ENCODE measurements at regions of chr3 and their contacts with region 1.

Region 1: GRCh38 chr3:185942907-185943759 is 5.3 kb upstream of the TRA2B start:
- DNase-seq: peak; percentile 91
- H3K4me3 Mint-ChIP-seq: no peak overlapping the region
- H3K27ac Mint-ChIP-seq: no peak overlapping the region
- H3K4me1 Mint-ChIP-seq: peaks cover 14% of the 10 kb centered on the region
- H3K27me3 Mint-ChIP-seq: no peaks in the 10 kb centered on the region

Region 2: DNA sequence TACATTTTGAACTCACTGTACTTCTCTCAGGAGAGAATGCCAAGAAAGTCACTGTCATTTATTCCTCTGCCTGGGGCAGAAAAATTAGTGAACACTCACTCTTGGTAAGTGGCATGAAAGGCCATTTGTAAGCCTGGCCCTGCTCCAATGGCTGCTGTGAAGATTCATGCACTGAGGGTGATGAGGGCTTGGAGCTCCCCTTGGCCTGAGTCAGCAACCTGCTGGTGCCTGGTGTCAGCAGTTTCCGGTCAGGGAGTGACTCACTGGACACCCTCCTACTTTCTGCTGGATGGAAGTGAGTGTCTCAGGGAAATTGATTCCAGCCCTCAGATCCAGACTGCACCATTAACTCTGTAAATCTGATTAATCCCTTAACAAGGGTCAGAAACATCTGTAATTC is 42.9 kb before region 1 on chr3:
- CTCF ChIA-PET with region 1: interaction called, 12 read pairs
- POLR2A ChIA-PET with region 1: no interaction called
- intact Hi-C with region 1: no loop called
- DNase-seq: peak; percentile 30
- H3K4me3 Mint-ChIP-seq: no peak overlapping the region
- H3K27ac Mint-ChIP-seq: no peak overlapping the region
- H3K4me1 Mint-ChIP-seq: no peaks in the 10 kb centered on the region
- H3K27me3 Mint-ChIP-seq: peaks cover 1% of the 10 kb centered on the region

Region 3: DNA sequence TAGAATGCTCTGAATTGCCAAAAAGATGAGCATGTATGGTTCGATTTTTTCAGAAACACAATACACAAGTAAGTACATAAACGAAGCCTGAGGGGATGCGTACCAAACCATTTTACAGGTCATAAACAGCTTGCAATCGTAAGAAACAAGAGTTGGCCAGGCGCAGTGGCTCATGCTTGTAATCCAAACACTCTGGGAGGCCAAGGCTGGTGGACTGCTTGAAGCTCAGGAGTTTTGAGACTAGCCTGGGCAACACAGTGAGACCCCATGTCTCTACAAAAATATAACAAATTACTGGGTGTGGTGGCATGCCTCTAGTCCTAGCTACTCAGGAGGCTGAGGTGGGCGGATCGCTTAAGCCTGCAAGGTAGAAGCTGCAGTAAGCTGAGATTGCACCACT is 18.8 kb before region 1 on chr3:
- CTCF ChIA-PET with region 1: interaction called, 32 read pairs
- POLR2A ChIA-PET with region 1: interaction called, 50 read pairs
- intact Hi-C with region 1: no loop called
- DNase-seq: no peak
- H3K4me3 Mint-ChIP-seq: no peak overlapping the region
- H3K27ac Mint-ChIP-seq: peak overlapping the region; percentile 60
- H3K4me1 Mint-ChIP-seq: peaks cover 58% of the 10 kb centered on the region
- H3K27me3 Mint-ChIP-seq: no peaks in the 10 kb centered on the region

Region 4: GRCh38 chr3:185959609-185960517 is 16.7 kb after region 1 on chr3:
- CTCF ChIA-PET with region 1: interaction called, 120 read pairs
- POLR2A ChIA-PET with region 1: interaction called, 3 read pairs
- intact Hi-C with region 1: loop called (anchors 1 kb)
- DNase-seq: no peak
- H3K4me3 Mint-ChIP-seq: no peak overlapping the region
- H3K27ac Mint-ChIP-seq: no peak overlapping the region
- H3K4me1 Mint-ChIP-seq: no peaks in the 10 kb centered on the region
- H3K27me3 Mint-ChIP-seq: peaks cover 2% of the 10 kb centered on the region

Region 5: GRCh38 chr3:185976977-185977678 is 34.0 kb after region 1 on chr3:
- CTCF ChIA-PET with region 1: interaction called, 48 read pairs
- POLR2A ChIA-PET with region 1: no interaction called
- intact Hi-C with region 1: loop called (anchors 1 kb)
- DNase-seq: peak; percentile 92
- H3K4me3 Mint-ChIP-seq: no peak overlapping the region
- H3K27ac Mint-ChIP-seq: peak overlapping the region; percentile 23
- H3K4me1 Mint-ChIP-seq: peaks cover 15% of the 10 kb centered on the region
- H3K27me3 Mint-ChIP-seq: no peaks in the 10 kb centered on the region

Region 6: DNA sequence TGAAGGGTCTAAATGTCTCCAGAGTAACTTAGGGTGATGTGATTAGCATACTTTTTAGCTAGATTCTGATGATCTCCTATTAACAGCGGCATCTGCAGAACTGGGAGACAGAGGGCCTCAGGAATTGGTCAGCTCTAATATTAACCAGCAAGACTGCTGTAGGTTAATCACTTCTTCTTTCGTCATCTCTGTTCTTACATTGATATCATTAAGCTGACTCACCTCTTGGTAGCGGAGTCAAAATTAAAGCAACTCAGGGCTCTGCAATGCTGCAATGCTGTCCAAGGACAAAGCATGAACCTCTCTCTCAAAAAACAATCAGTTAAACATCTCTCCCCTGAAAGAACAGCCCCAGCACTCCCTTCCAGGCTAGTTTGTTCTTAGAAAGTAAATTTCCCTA is 52.2 kb after region 1 on chr3:
- CTCF ChIA-PET with region 1: interaction called, 11 read pairs
- POLR2A ChIA-PET with region 1: no interaction called
- intact Hi-C with region 1: no loop called
- DNase-seq: no peak
- H3K4me3 Mint-ChIP-seq: no peak overlapping the region
- H3K27ac Mint-ChIP-seq: no peak overlapping the region
- H3K4me1 Mint-ChIP-seq: no peaks in the 10 kb centered on the region
- H3K27me3 Mint-ChIP-seq: peaks cover 7% of the 10 kb centered on the region

Region 7: DNA sequence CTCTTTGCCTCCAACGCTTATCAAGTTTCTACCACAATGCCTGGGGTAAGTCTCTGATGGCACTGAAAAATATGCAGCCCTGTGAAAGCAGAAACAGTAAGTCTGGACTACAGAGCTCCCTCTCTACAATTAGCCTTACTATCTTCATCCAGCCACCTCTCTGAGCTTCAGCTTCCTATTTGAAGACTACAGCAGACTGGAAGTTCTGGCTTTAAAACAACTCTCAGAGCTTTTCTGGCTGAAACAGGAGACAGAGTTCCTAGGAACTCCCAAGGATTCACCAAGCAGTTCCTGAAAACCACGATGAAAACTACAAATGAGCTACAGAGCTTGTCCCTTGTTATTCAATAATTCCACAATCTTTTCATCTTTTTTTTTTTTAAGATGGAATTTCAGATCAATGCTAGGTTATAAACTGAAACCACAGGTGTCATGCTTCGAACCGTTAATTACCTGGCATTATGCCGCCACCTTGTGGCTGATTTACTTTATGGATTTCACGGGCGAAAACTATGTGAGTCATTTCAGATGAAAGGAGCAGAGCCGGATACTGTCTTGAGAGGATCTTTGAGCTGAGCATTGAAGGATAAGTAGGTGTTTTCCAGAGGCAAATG is 597.2 kb after region 1 on chr3:
- CTCF ChIA-PET with region 1: interaction called, 59 read pairs
- POLR2A ChIA-PET with region 1: interaction called, 6 read pairs
- intact Hi-C with region 1: loop called (anchors 1 kb)
- DNase-seq: peak; percentile 90
- H3K4me3 Mint-ChIP-seq: no peak overlapping the region
- H3K27ac Mint-ChIP-seq: peak overlapping the region; percentile 25
- H3K4me1 Mint-ChIP-seq: peaks cover 57% of the 10 kb centered on the region
- H3K27me3 Mint-ChIP-seq: no peaks in the 10 kb centered on the region

Region 8: GRCh38 chr3:187101184-187102072 is 1158.3 kb after region 1 on chr3:
- CTCF ChIA-PET with region 1: no interaction called
- POLR2A ChIA-PET with region 1: no interaction called
- intact Hi-C with region 1: no loop called
- DNase-seq: peak; percentile 68
- H3K4me3 Mint-ChIP-seq: peak overlapping the region; percentile 20
- H3K27ac Mint-ChIP-seq: peak overlapping the region; percentile 28
- H3K4me1 Mint-ChIP-seq: peaks cover 30% of the 10 kb centered on the region
- H3K27me3 Mint-ChIP-seq: no peaks in the 10 kb centered on the region